ENCODE measurements at regions of chr11 and their contacts with region 1.

Region 1: DNA sequence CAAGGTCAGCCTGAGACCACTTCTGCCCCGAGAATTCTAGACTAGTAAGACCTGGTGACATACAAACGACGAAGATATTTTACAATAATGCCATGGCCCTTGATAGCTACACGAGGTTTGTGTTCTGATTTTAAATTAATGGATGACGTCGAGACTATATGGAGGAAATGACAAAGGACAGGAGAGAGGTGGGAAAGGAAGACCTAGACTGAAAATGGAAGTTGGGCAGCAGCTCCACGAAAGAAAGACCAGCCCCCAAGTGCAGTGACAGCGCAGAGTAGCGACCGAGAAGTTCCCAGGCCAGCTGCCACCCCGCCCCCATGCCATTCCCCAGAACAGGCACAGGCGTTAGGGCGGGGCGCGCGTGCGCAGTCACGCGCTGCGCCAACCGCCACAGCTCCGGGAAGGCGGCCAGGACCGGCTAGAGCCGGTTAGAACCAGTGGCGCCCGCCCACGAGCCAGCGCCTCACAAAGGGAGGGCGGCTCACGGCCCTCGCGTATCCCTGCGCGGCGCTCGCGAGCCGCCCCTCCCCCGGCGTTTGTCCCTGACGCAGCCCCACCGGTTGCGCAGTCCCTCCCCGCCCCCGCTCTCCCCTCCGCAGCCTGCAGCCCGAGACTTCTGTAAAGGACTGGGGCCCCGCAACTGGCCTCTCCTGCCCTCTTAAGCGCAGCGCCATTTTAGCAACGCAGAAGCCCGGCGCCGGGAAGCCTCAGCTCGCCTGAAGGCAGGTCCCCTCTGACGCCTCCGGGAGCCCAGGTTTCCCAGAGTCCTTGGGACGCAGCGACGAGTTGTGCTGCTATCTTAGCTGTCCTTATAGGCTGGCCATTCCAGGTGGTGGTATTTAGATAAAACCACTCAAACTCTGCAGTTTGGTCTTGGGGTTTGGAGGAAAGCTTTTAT is 1.5 kb upstream of the MALAT1 start:
- DNase-seq: peak; percentile 95 to 99 (median 98)
- ATAC-seq: peak; percentile 89
- H3K4me3 ChIP-seq: peak overlapping the region; percentile 99
- H3K4me3 Mint-ChIP-seq: no peak overlapping the region
- H3K27ac ChIP-seq: peak overlapping the region; percentile 99
- H3K27ac Mint-ChIP-seq: no peak overlapping the region
- H3K4me1 ChIP-seq: peaks cover 11 to 12% of the 10 kb centered on the region in 2 donors
- H3K4me1 Mint-ChIP-seq: peaks cover 13 to 43% (median 24%) of the 10 kb centered on the region in 7 donors
- H3K27me3 ChIP-seq: no peaks in the 10 kb centered on the region
- H3K27me3 Mint-ChIP-seq: peaks cover 0 to 6% (median 0%) of the 10 kb centered on the region in 5 donors

Region 2: DNA sequence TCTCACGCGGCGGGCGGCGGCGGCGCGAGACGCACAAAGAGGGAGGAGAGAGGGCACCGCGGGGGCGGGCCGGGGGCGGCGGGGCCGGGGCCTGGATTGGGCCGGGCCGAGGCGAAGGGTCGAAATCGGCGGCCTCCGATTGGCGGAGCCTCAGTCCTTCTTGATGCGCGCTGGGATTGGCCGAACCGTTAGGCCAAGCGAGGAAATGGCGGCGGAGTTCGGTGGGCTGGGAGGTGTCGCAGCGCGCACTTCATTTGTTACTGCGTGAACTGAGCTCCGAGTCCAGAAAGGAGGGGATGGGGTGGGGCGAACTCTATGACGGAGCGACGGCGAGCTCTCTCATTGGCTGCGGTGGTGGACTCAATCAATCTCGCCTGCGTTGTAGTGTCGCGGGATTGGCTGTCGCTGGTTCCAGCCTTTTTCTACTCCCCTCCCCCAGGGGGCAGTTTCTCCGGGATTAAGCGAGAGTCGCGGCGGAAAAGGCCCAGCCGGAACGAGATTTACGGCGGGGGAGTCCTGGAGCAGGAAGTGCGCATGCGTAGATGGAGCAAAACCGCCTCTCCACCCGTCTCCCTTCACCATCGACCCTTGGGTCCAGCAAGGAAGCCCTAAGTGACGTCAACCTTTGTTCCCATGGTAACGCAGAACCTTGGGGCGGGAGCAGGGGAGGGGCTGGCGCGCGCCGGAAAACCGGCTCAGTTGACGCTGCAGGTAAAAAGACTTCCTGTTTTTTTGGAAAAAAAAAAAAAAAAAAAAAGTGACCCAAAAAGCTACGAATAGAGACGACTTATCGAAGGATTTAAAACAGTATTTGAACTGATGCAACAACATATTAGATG is 718.7 kb before region 1 on chr11 and contains the start of gene SF1:
- CTCF ChIA-PET with region 1: no interaction called
- POLR2A ChIA-PET with region 1: interaction called, 7 read pairs
- intact Hi-C with region 1: loop called in 1 of 2 experiments (anchors 2 kb)
- DNase-seq: peak; percentile 86 to 100 (median 100)
- ATAC-seq: peak; percentile 89
- H3K4me3 ChIP-seq: peak within 1 kb of the TSS; percentile 94
- H3K4me3 Mint-ChIP-seq: peak within 1 kb of the TSS; percentile 90 to 97 (median 94)
- H3K27ac ChIP-seq: peak within 1 kb of the TSS; percentile 99
- H3K27ac Mint-ChIP-seq: peak within 1 kb of the TSS; percentile 98 to 100 (median 99)
- H3K4me1 ChIP-seq: peaks cover 48 to 52% of the 10 kb centered on the region in 2 donors
- H3K4me1 Mint-ChIP-seq: peaks cover 51 to 71% (median 64%) of the 10 kb centered on the region in 7 donors
- H3K27me3 ChIP-seq: no peaks in the 10 kb centered on the region
- H3K27me3 Mint-ChIP-seq: peaks cover 0 to 5% (median 0%) of the 10 kb centered on the region in 5 donors
- total RNA-seq, gene SF1: 462 to 1,612 (median 904) TPM

Region 3: GRCh38 chr11:65243773-65244172 is 253.6 kb before region 1 on chr11:
- CTCF ChIA-PET with region 1: no interaction called
- POLR2A ChIA-PET with region 1: no interaction called
- intact Hi-C with region 1: no loop called
- DNase-seq: no peak
- ATAC-seq: no peak
- H3K4me3 ChIP-seq: no peak overlapping the region
- H3K4me3 Mint-ChIP-seq: no peak overlapping the region
- H3K27ac ChIP-seq: no peak overlapping the region
- H3K27ac Mint-ChIP-seq: no peak overlapping the region
- H3K4me1 ChIP-seq: no peaks in the 10 kb centered on the region
- H3K4me1 Mint-ChIP-seq: no peaks in the 10 kb centered on the region
- H3K27me3 ChIP-seq: no peaks in the 10 kb centered on the region
- H3K27me3 Mint-ChIP-seq: peaks cover 0 to 3% (median 0%) of the 10 kb centered on the region in 5 donors

Region 4: GRCh38 chr11:65329944-65330403 is 167.4 kb before region 1 on chr11:
- CTCF ChIA-PET with region 1: no interaction called
- POLR2A ChIA-PET with region 1: interaction called, 32 read pairs
- intact Hi-C with region 1: no loop called
- DNase-seq: peak; percentile 51 to 79 (median 75)
- ATAC-seq: peak; percentile 52
- H3K4me3 ChIP-seq: no peak overlapping the region
- H3K4me3 Mint-ChIP-seq: peak overlapping the region in 3 of 10 donors; percentile 26 to 52 (median 51)
- H3K27ac ChIP-seq: no peak overlapping the region
- H3K27ac Mint-ChIP-seq: peak overlapping the region in 6 of 9 donors; percentile 32 to 81 (median 51)
- H3K4me1 ChIP-seq: peaks cover 7 to 14% of the 10 kb centered on the region in 2 donors
- H3K4me1 Mint-ChIP-seq: peaks cover 7 to 22% (median 17%) of the 10 kb centered on the region in 7 donors
- H3K27me3 ChIP-seq: no peaks in the 10 kb centered on the region
- H3K27me3 Mint-ChIP-seq: peaks cover 0 to 5% (median 0%) of the 10 kb centered on the region in 5 donors

Region 5: GRCh38 chr11:65425105-65425970 is 72.1 kb before region 1 on chr11:
- CTCF ChIA-PET with region 1: interaction called, 68 read pairs
- POLR2A ChIA-PET with region 1: interaction called, 2,591 read pairs
- intact Hi-C with region 1: loop called (anchors 1 kb)
- DNase-seq: peak in 8 of 9 donors; percentile 75 to 98 (median 94)
- ATAC-seq: peak; percentile 56
- H3K4me3 ChIP-seq: peak overlapping the region; percentile 74
- H3K4me3 Mint-ChIP-seq: peak overlapping the region; percentile 92 to 100 (median 97)
- H3K27ac ChIP-seq: peak overlapping the region; percentile 98
- H3K27ac Mint-ChIP-seq: peak overlapping the region; percentile 97 to 100 (median 99)
- H3K4me1 ChIP-seq: peaks cover 45 to 46% of the 10 kb centered on the region in 2 donors
- H3K4me1 Mint-ChIP-seq: peaks cover 42 to 79% (median 50%) of the 10 kb centered on the region in 7 donors
- H3K27me3 ChIP-seq: no peaks in the 10 kb centered on the region
- H3K27me3 Mint-ChIP-seq: peaks cover 0 to 32% (median 0%) of the 10 kb centered on the region in 5 donors

Region 6: DNA sequence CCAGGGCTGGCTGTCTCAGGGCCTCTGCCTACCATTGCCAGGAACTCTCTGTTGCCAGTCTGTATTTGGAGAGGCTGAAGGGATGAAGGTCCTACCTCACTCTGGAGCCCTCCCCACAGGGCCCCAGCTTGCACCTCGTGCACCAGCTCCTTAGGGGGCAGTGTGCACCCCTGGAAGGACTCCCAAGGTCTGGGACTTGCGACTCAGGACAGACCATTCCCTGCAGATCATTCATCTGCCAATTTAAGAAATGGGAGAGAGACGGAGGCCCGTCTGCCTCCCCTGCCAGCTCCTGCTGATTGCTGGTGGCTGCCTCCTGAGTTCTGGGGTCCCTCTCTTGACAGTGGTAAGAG is 26.0 kb before region 1 on chr11:
- CTCF ChIA-PET with region 1: interaction called, 19 read pairs
- POLR2A ChIA-PET with region 1: interaction called, 1,164 read pairs
- intact Hi-C with region 1: loop called in 1 of 2 experiments (anchors 1 kb)
- DNase-seq: peak in 2 of 9 donors; percentile 16 to 21
- ATAC-seq: peak; percentile 49
- H3K4me3 ChIP-seq: peak overlapping the region; percentile 15
- H3K4me3 Mint-ChIP-seq: peak overlapping the region in 9 of 10 donors; percentile 14 to 94 (median 84)
- H3K27ac ChIP-seq: peak overlapping the region; percentile 78
- H3K27ac Mint-ChIP-seq: peak overlapping the region; percentile 97 to 100 (median 98)
- H3K4me1 ChIP-seq: peaks cover 10 to 20% of the 10 kb centered on the region in 2 donors
- H3K4me1 Mint-ChIP-seq: peaks cover 6 to 37% (median 15%) of the 10 kb centered on the region in 7 donors
- H3K27me3 ChIP-seq: no peaks in the 10 kb centered on the region
- H3K27me3 Mint-ChIP-seq: no peaks in the 10 kb centered on the region

Region 7: DNA sequence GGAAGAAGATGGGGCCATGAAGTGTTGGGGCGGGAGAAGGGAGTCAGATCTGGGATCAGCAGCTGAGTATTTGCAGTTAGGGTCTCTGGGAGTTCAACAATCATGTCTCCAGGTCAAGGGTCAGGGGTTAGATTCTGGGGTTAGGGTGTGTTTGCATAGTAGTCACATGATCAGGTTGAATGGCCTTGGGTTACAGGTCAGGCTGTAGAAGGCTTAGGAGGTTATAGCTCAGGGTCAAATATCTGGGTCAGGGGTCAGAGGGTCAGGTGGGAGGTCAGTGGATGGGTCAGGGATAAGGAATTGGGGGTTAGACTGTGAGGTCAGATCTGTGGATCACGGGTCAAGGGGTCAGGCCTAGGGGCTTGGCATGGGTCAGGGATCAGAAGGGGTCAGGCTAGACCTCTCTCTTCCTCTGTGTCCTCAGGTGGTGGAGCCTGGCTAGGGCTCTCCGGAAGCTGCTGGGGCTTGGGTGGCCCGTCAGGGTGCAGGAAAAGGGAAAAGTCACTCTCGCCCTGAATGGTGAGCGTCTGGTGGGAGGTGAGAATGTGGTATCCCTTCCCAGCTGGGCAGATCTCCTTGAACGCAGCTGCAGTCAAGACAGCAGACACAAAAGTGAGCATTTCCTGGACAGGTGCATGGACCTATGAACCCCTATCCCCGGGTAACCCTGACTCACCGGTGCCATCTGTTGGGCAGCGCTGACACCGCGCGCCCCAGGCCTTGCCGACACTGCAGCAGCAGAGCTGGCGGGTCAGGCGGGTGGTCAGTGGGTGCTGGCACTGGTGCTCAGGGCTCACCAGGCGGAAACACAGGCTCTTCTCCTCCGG is 54.4 kb after region 1 on chr11:
- CTCF ChIA-PET with region 1: no interaction called
- POLR2A ChIA-PET with region 1: interaction called, 25 read pairs
- intact Hi-C with region 1: no loop called
- DNase-seq: peak in 6 of 9 donors; percentile 51 to 62 (median 56)
- ATAC-seq: peak; percentile 53
- H3K4me3 ChIP-seq: no peak overlapping the region
- H3K4me3 Mint-ChIP-seq: peak overlapping the region; percentile 18 to 98 (median 74)
- H3K27ac ChIP-seq: peak overlapping the region; percentile 31
- H3K27ac Mint-ChIP-seq: peak overlapping the region; percentile 71 to 93 (median 87)
- H3K4me1 ChIP-seq: peaks cover 35 to 78% of the 10 kb centered on the region in 2 donors
- H3K4me1 Mint-ChIP-seq: peaks cover 50 to 86% (median 74%) of the 10 kb centered on the region in 7 donors
- H3K27me3 ChIP-seq: no peaks in the 10 kb centered on the region
- H3K27me3 Mint-ChIP-seq: no peaks in the 10 kb centered on the region

Region 8: DNA sequence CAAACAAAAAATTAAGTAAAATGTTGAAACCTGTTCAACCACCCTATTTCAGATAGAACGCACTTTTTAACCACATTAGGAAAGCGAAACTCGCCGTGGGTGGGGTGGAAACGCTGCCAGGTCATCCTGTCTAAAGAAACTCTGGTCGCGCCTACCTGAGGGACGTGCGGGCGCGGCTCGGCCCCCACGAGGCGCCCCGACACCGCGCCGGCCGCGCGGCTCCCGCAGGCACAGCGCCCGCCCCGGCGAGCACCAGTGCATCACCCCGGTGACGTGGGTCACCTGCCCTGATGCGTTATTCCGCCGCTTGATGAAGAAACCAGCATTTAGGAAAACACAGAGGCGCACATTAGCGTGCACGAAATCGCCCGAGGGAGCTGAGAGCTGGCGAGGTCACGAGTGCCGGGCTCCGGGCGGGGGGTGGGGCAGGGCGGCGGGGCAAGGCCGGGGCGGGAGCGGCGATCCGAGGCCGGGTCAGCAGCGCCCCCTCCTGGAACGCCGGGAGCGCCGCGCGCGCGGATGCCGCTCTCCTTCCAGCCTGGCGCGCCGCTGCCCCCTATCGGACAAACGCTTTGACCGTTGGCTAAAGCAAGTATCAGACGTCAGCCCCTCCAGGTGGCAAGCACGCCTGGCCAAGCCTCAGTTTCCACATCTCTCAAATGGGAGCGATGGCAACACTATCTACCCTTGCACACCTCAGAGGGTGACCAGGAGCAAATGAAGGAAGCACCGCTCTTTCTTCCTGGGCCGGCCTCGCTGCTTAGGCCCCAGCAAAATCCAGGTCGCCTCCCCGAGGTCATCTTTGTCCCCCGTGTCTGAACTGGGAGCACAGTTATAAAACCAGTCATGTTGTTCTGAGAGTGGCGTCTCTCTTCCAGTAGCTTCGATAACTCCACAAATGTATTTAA is 320.7 kb after region 1 on chr11:
- CTCF ChIA-PET with region 1: no interaction called
- POLR2A ChIA-PET with region 1: no interaction called
- intact Hi-C with region 1: no loop called
- DNase-seq: peak; percentile 79 to 98 (median 89)
- ATAC-seq: peak; percentile 98
- H3K4me3 ChIP-seq: peak overlapping the region; percentile 72
- H3K4me3 Mint-ChIP-seq: peak overlapping the region; percentile 74 to 90 (median 82)
- H3K27ac ChIP-seq: peak overlapping the region; percentile 75
- H3K27ac Mint-ChIP-seq: peak overlapping the region; percentile 56 to 90 (median 76)
- H3K4me1 ChIP-seq: peaks cover 7% of the 10 kb centered on the region in 2 donors
- H3K4me1 Mint-ChIP-seq: peaks cover 6 to 21% (median 17%) of the 10 kb centered on the region in 7 donors
- H3K27me3 ChIP-seq: no peaks in the 10 kb centered on the region
- H3K27me3 Mint-ChIP-seq: peaks cover 0 to 4% (median 0%) of the 10 kb centered on the region in 5 donors

Region 9: GRCh38 chr11:65888163-65888814 is 390.9 kb after region 1 on chr11 and contains the start of gene FIBP:
- CTCF ChIA-PET with region 1: no interaction called
- POLR2A ChIA-PET with region 1: interaction called, 13 read pairs
- intact Hi-C with region 1: no loop called
- DNase-seq: peak; percentile 84 to 95 (median 90)
- ATAC-seq: peak; percentile 74
- H3K4me3 ChIP-seq: peak within 1 kb of the TSS; percentile 84
- H3K4me3 Mint-ChIP-seq: peak within 1 kb of the TSS; percentile 88 to 97 (median 93)
- H3K27ac ChIP-seq: peak within 1 kb of the TSS; percentile 92
- H3K27ac Mint-ChIP-seq: peak within 1 kb of the TSS; percentile 93 to 99 (median 97)
- H3K4me1 ChIP-seq: peaks cover 37 to 45% of the 10 kb centered on the region in 2 donors
- H3K4me1 Mint-ChIP-seq: peaks cover 50 to 69% (median 53%) of the 10 kb centered on the region in 7 donors
- H3K27me3 ChIP-seq: no peaks in the 10 kb centered on the region
- H3K27me3 Mint-ChIP-seq: no peaks in the 10 kb centered on the region
- total RNA-seq, gene FIBP: 25.9 to 72.1 (median 43.4) TPM

Measured in naive thymus-derived CD4-positive, alpha-beta T cell (primary cell).